HepG2 (cell line): ENCODE measurements at regions of chr12 and their contacts with region 1.

Region 1: GRCh38 chr12:52582971-52583456 is 9.4 kb upstream of the KRT74 start:
- DNase-seq: peak; percentile 40
- ATAC-seq: peak; percentile 94
- H3K4me3 ChIP-seq: no peak overlapping the region
- H3K27ac ChIP-seq: no peak overlapping the region
- H3K4me1 ChIP-seq: no peaks in the 10 kb centered on the region
- H3K27me3 ChIP-seq: peaks cover 4 to 49% of the 10 kb centered on the region in 2 experiments; a peak in 2 of 5 replicates
- CTCF ChIP-seq: peak; percentile 82
- EP300 ChIP-seq: no peak
- POLR2A ChIP-seq: no peak
- RAD21 ChIP-seq: peak; percentile 71

Region 2: GRCh38 chr12:52870351-52871290 is 287.6 kb after region 1 on chr12:
- CTCF ChIA-PET with region 1: interaction called, 7 read pairs
- POLR2A ChIA-PET with region 1: no interaction called
- in situ Hi-C with region 1: loop called (anchors 5 kb)
- intact Hi-C with region 1: loop called (anchors 2 kb)
- DNase-seq: peak; percentile 45
- ATAC-seq: peak; percentile 77
- H3K4me3 ChIP-seq: no peak overlapping the region
- H3K27ac ChIP-seq: no peak overlapping the region
- H3K4me1 ChIP-seq: peaks cover 43% of the 10 kb centered on the region
- H3K27me3 ChIP-seq: peaks cover 0 to 17% of the 10 kb centered on the region in 2 experiments; a peak in 3 of 5 replicates
- CTCF ChIP-seq: peak; percentile 81
- EP300 ChIP-seq: no peak
- POLR2A ChIP-seq: no peak
- RAD21 ChIP-seq: peak; percentile 91